Calu3 (cell line): ENCODE measurements at regions of chr7 and their contacts with region 1.

Region 1: DNA sequence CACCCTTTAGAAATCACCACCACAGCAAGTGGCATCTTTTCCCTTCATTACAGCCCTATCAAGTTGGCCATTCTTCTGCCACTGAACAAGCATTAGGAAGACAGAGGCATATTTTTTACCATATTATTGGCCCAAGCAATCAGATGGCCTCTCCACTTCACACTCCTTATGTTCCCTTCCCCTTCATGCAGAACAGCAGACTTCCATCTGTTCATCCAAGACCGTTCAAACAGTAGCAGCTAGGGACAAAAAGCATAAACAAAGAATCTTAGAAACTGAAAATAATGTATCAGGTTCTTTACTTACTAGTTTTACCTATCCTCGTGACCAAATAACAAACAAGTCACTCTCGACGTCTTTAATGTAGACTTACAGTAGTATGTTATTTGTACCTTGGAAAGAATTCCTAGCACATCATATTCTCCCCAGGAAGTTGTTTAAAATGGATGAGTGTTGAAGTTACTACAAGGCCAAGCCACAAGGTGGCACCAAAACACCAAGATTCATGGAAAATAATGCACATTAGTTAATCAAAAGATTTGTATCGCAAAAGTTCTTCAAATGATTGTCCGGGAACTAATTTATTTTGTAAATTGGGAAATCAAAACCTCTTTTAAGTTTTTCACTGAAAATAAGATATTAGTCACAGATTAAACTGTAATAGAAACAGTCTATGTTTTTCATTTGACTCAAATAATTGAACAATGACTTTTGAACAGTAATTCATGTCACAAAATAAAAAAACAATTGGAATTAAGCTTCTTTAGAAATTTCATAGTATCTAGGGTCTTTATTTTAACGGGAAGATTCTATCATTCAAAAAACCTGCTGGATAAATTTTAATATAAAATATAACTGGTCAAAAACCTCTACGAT is 112.1 kb downstream of the VPS41 start:
- DNase-seq: peak; percentile 79
- H3K4me3 Mint-ChIP-seq: no peak overlapping the region
- H3K27ac Mint-ChIP-seq: peak overlapping the region; percentile 25
- H3K4me1 Mint-ChIP-seq: peaks cover 30% of the 10 kb centered on the region
- H3K27me3 Mint-ChIP-seq: no peaks in the 10 kb centered on the region
- CTCF ChIP-seq: peak; percentile 83

Region 2: DNA sequence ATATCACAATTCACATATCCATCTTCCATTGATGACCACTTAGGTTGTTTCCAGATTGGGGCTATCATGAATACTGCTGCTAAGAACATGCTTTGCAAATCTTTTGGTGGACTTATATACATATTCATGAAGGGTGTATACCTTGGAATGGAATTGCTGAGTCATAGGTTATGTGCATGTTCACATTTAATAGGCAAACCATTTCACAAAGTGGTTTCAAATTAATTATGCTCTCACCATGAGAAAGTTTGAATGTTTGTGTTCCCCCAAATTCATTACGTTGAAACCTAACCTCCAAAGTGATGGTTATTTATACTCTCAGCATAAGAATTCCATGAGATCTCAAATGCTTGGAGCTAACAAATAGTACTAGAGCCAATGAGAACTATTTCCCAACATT is 25.7 kb after region 1 on chr7:
- CTCF ChIA-PET with region 1: no interaction called
- intact Hi-C with region 1: no loop called
- DNase-seq: no peak
- H3K4me3 Mint-ChIP-seq: no peak overlapping the region
- H3K27ac Mint-ChIP-seq: no peak overlapping the region
- H3K4me1 Mint-ChIP-seq: peaks cover 32% of the 10 kb centered on the region
- H3K27me3 Mint-ChIP-seq: no peaks in the 10 kb centered on the region
- CTCF ChIP-seq: no peak

Region 3: DNA sequence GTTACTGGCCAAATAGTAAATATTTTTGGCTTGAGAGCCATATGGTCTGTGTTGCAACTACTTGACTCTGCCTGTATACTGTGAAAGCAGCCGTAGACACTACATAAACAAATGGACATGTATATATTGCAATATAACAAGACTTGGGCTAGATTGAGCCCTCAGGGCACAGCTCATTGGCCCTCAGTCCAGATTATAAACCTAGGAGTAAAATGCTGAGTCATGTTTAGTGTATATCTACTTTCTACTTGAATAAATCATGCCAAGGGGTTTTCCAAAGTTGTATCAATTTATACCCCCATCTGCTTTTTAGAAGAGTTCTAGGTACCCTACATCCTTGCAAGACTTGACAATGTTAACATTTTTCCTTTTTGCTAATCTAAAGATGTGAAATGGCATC is 153.4 kb after region 1 on chr7:
- CTCF ChIA-PET with region 1: no interaction called
- intact Hi-C with region 1: loop called (anchors 5 kb)
- DNase-seq: no peak
- H3K4me3 Mint-ChIP-seq: no peak overlapping the region
- H3K27ac Mint-ChIP-seq: no peak overlapping the region
- H3K4me1 Mint-ChIP-seq: peaks cover 73% of the 10 kb centered on the region
- H3K27me3 Mint-ChIP-seq: no peaks in the 10 kb centered on the region
- CTCF ChIP-seq: no peak

Region 4: DNA sequence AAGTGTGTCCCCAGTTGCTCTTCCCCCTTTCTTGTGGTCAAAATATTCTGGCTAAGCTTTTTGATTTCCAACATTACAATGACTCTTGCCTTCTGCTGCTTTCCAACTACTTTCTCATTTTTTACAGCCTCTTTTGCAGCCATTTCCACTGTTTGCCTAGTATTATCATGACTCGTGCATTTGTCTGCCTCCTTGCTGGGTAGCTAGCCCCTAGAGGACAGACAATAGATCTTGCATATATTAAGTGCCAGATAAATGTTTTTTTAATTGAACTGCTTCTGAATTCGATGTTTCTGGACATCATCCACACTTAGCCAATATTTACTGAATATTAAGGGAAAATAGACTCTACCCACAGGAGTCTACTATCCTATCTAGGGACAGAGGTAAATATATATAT is 305.4 kb after region 1 on chr7:
- CTCF ChIA-PET with region 1: no interaction called
- intact Hi-C with region 1: loop called (anchors 10 kb)
- DNase-seq: no peak
- H3K4me3 Mint-ChIP-seq: no peak overlapping the region
- H3K27ac Mint-ChIP-seq: no peak overlapping the region
- H3K4me1 Mint-ChIP-seq: no peaks in the 10 kb centered on the region
- H3K27me3 Mint-ChIP-seq: no peaks in the 10 kb centered on the region
- CTCF ChIP-seq: no peak

Region 5: DNA sequence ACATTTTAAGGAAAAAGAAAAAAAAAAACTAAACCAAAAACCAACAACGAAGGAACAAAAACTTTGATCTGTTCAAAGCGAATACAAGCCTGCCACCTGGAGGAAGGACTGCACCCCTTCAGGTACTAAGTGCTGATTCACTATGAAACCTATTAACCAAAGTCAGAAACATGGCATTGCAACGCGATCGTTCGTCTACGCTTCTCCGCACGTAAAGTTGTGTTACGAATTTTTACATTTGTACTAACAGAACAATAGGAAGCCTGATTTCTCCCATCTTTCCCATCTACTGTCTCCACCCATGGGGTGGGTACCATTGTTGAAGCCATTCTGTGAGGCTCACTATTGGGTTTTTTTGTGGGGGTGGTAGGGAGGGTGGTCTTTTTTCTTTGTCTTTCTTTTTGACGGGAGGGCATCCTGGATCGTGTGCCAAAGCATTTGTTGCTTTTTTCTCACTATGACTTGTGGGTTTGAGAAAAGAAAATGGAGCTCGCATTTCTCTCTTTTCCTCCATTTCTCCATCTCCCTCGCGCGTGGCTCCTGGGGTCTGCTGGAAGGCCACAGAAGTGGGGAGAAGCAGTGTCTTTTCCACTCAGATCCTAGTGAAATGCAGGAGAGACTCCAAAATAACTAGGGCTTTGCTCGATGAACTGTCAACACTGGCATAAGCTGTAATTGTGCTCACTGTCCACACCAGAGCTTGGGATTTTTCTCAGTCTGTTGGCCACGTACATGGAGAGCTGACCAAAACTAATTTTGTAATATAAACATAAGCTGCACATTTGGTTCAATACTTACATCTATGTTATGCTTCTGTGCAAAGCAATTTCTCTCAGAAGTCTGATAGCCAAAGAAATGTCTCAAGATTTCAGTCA is 668.4 kb after region 1 on chr7:
- CTCF ChIA-PET with region 1: no interaction called
- intact Hi-C with region 1: loop called (anchors 1 kb)
- DNase-seq: peak; percentile 75
- H3K4me3 Mint-ChIP-seq: peak overlapping the region; percentile 36
- H3K27ac Mint-ChIP-seq: no peak overlapping the region
- H3K4me1 Mint-ChIP-seq: peaks cover 15% of the 10 kb centered on the region
- H3K27me3 Mint-ChIP-seq: no peaks in the 10 kb centered on the region
- CTCF ChIP-seq: peak; percentile 79